MCF 10A (cell line): ENCODE measurements at regions of chr5 and their contacts with region 1.

Region 1: GRCh38 chr5:42767491-42768105 is 11.0 kb downstream of the CCDC152 start:
- DNase-seq: peak; percentile 58
- H3K4me3 Mint-ChIP-seq: no peak overlapping the region
- H3K27ac Mint-ChIP-seq: no peak overlapping the region
- H3K4me1 Mint-ChIP-seq: peaks cover 1% of the 10 kb centered on the region
- H3K27me3 Mint-ChIP-seq: no peaks in the 10 kb centered on the region
- CTCF ChIP-seq: peak; percentile 64

Region 2: DNA sequence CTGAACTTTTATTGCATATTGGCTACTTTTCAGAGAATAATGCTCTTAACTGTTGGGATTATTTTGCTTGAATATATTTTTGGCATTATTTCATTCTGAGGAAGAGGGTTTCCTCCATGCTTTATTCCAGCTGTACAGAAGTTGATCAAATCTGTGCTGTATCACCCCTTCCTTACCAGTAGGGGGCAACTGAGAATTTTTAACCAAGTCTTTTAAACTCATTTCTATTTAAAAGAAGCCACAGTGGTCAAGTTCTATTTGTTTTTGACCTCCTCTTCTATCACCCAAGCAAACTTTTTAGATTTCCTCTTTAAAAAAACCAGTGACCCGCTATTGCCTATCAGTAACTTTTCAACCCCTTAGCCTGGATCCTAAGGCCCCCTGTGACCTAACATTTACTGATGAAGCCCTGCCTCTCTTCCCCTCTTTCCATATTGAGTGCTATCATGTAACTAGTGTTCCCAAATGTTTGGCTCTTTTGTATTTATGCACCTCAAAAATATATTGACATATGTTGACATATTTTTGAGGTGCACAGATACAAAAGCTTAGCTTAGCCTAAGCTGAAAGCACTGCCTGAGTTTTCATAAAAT is 761.9 kb before region 1 on chr5:
- CTCF ChIA-PET with region 1: interaction called, 4 read pairs
- POLR2A ChIA-PET with region 1: interaction called, 4 read pairs
- intact Hi-C with region 1: loop called (anchors 10 kb)
- DNase-seq: peak; percentile 33
- H3K4me3 Mint-ChIP-seq: no peak overlapping the region
- H3K27ac Mint-ChIP-seq: no peak overlapping the region
- H3K4me1 Mint-ChIP-seq: no peaks in the 10 kb centered on the region
- H3K27me3 Mint-ChIP-seq: no peaks in the 10 kb centered on the region
- CTCF ChIP-seq: peak; percentile 69

Region 3: GRCh38 chr5:42836070-42836769 is 68.6 kb after region 1 on chr5:
- CTCF ChIA-PET with region 1: no interaction called
- POLR2A ChIA-PET with region 1: no interaction called
- intact Hi-C with region 1: no loop called
- DNase-seq: no peak
- H3K4me3 Mint-ChIP-seq: no peak overlapping the region
- H3K27ac Mint-ChIP-seq: no peak overlapping the region
- H3K4me1 Mint-ChIP-seq: peaks cover 14% of the 10 kb centered on the region
- H3K27me3 Mint-ChIP-seq: no peaks in the 10 kb centered on the region
- CTCF ChIP-seq: no peak